ENCODE measurements at regions of chr4 and their contacts with region 1.

Region 1: GRCh38 chr4:90317785-90318184 is 190.6 kb downstream of the CCSER1 start:
- DNase-seq: peak; percentile 84
- H3K4me3 ChIP-seq: no peak overlapping the region
- H3K27ac ChIP-seq: peak overlapping the region; percentile 81
- H3K4me1 ChIP-seq: peaks cover 11% of the 10 kb centered on the region
- H3K27me3 ChIP-seq: no peaks in the 10 kb centered on the region
- CTCF ChIP-seq: no peak

Region 2: GRCh38 chr4:90357117-90357710 is 39.4 kb after region 1 on chr4:
- CTCF ChIA-PET with region 1: no interaction called
- dilution Hi-C with region 1: no loop called
- in situ Hi-C with region 1: no loop called
- intact Hi-C with region 1: loop called (anchors 5 kb)
- DNase-seq: peak; percentile 36
- H3K4me3 ChIP-seq: no peak overlapping the region
- H3K27ac ChIP-seq: no peak overlapping the region
- H3K4me1 ChIP-seq: no peaks in the 10 kb centered on the region
- H3K27me3 ChIP-seq: no peaks in the 10 kb centered on the region
- CTCF ChIP-seq: peak; percentile 58 to 64

Region 3: GRCh38 chr4:92163348-92163747 is 1845.6 kb after region 1 on chr4:
- CTCF ChIA-PET with region 1: no interaction called
- dilution Hi-C with region 1: no loop called
- in situ Hi-C with region 1: no loop called
- intact Hi-C with region 1: loop called (anchors 10 kb)
- DNase-seq: peak; percentile 2
- H3K4me3 ChIP-seq: no peak overlapping the region
- H3K27ac ChIP-seq: no peak overlapping the region
- H3K4me1 ChIP-seq: no peaks in the 10 kb centered on the region
- H3K27me3 ChIP-seq: no peaks in the 10 kb centered on the region
- CTCF ChIP-seq: peak; percentile 47 to 64

Measured in mammary epithelial cell (primary cell).